ENCODE measurements at regions of chr16 and their contacts with region 1.

Region 1: GRCh38 chr16:57519796-57520360 is 16.5 kb downstream of the CCDC102A start:
- DNase-seq: peak; percentile 87
- H3K4me3 Mint-ChIP-seq: no peak overlapping the region
- H3K27ac Mint-ChIP-seq: peak overlapping the region; percentile 73
- H3K4me1 Mint-ChIP-seq: peaks cover 4% of the 10 kb centered on the region
- H3K27me3 Mint-ChIP-seq: no peaks in the 10 kb centered on the region

Region 2: DNA sequence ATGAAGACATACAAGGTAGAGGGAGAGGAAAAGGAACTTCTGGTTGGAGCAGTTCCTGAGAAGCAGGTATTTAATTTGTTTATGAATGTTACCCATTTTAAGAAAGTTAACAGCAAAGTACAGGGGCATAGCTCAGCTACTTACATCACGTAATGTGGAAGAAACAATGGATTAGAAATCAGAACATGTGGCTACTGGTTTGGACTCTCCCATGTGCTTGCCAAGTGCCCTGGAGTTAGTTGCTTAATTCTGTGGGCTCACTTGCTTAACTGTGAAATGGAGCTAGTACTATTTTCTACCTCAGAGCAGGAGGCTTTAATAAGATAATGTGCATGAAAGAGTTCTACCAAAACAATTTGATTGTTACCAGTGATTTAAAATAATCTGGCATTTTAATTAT is 306.4 kb before region 1 on chr16:
- CTCF ChIA-PET with region 1: no interaction called
- intact Hi-C with region 1: no loop called
- DNase-seq: no peak
- H3K4me3 Mint-ChIP-seq: no peak overlapping the region
- H3K27ac Mint-ChIP-seq: no peak overlapping the region
- H3K4me1 Mint-ChIP-seq: no peaks in the 10 kb centered on the region
- H3K27me3 Mint-ChIP-seq: no peaks in the 10 kb centered on the region

Region 3: DNA sequence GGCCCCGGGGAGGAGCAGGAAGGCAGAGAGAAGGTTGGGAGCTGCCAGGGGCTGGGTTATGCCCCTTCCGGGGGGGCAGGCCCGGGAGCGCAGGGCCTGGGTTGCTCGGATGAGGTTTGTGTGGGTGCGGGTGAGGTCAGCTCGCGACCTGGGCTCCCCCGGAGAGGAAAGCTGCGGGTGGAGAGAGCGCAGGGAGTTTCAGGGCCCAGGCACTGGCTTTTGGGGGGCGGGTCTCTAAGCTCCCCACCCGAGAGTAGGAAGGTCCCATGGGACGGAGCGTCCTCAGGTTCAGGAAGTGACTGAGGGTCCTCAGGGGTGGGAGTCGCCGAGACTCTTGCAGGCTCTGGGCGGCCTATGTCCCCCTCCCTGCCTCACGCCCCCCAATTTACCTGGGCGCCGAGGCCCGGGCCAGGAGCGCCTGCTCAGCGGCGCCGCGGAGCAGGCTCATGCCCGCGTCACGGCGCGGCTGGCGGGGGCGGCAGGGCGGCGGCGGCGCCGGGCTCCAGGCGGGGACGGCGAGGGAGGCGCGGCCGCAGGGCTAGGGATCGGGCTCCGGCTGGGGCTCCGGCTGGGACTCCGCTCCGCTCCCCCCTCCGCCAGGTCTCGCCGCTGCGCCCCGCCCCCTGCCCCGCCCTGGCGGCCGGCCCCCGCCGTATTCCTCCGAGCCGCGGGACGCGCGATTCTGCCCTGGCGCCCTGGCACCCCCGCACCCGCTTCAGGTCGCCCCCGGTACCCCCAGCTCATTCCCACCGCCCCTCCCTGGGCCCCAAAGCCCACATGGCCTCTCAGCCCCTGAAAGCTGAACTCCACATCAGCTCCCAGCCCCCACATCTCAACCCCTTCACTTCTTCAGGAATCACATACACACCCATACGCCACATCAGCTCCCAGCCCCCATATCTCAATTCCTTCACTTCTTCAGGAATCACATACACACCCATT is 33.7 kb before region 1 on chr16 and contains the start of gene DOK4:
- CTCF ChIA-PET with region 1: interaction called, 22 read pairs
- intact Hi-C with region 1: no loop called
- DNase-seq: peak; percentile 79
- H3K4me3 Mint-ChIP-seq: peak within 1 kb of the TSS; percentile 77
- H3K27ac Mint-ChIP-seq: peak within 1 kb of the TSS; percentile 63
- H3K4me1 Mint-ChIP-seq: peaks cover 18% of the 10 kb centered on the region
- H3K27me3 Mint-ChIP-seq: no peaks in the 10 kb centered on the region
- total RNA-seq, gene DOK4: 5.0 to 6.2 TPM

Measured in activated naive CD4-positive, alpha-beta T cell treated with anti-CD3 and anti-CD28 coated beads for 36 hours (primary cell).